CD4-positive, alpha-beta memory T cell (primary cell): ENCODE measurements at regions of chr7 and their contacts with region 1.

Region 1: DNA sequence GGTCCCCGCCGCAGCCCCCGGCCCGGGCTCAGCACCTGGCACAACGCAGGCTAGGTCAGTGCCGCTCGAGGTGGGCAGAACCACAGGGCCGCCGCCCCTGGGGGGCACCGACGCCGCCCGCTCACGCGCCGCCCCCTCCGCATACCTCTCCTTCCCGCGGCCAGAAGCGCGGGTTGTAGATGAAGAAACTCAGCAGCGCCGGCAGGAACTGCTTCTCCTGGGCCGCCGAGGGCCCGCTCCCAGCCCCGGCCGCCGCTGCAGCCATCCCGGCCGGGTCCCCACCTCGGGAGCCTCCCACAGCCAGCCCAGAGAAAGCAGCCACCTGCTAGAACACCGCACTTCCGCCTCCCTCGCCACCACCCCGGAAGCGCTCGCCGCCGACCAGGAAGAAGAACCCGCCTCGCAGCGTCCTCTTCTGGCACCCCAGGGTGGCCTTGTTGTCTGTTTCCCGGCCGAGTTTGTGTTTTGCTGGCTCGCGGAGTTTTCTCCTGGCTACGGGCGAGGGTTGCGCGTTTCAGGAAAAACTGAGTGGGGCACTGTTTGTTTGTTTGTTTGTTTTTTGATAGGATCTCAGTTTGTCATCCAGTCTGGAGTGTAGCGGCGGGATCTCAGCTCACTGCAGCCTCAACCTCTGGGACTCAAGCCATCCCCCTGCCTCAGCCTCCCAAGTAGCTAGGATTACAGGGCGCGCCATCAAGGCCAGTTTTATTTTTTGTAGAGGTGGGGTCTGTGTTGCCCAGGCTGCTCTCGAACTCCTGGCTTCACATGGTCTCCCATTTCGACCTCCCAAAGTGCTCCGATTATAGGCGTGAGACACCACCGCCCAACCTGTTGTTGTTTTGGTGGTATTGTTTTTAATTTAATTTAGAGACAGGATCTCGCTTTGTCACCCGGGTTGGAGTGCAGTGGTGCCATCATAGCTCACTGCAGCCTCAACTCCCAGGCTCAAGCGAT is 17.7 kb downstream of the OCM2 start:
- DNase-seq: peak; percentile 81 to 85 (median 83)
- H3K4me3 ChIP-seq: peak overlapping the region; percentile 91 to 93
- H3K4me3 Mint-ChIP-seq: peak overlapping the region; percentile 93 to 98 (median 96)
- H3K27ac ChIP-seq: peak overlapping the region; percentile 65
- H3K27ac Mint-ChIP-seq: peak overlapping the region; percentile 86 to 96 (median 95)
- H3K4me1 ChIP-seq: peaks cover 15% of the 10 kb centered on the region
- H3K4me1 Mint-ChIP-seq: peaks cover 10 to 35% (median 19%) of the 10 kb centered on the region in 4 donors
- H3K27me3 ChIP-seq: no peaks in the 10 kb centered on the region
- H3K27me3 Mint-ChIP-seq: no peaks in the 10 kb centered on the region

Region 2: GRCh38 chr7:97872025-97872669 is 100.1 kb before region 1 on chr7 and contains the start of gene ASNS:
- CTCF ChIA-PET with region 1: no interaction called
- POLR2A ChIA-PET with region 1: interaction called, 13 read pairs
- intact Hi-C with region 1: loop called (anchors 1 kb)
- DNase-seq: peak; percentile 80 to 88 (median 85)
- H3K4me3 ChIP-seq: peak within 1 kb of the TSS; percentile 75 to 78
- H3K4me3 Mint-ChIP-seq: peak within 1 kb of the TSS; percentile 85 to 93 (median 90)
- H3K27ac ChIP-seq: peak within 1 kb of the TSS; percentile 46
- H3K27ac Mint-ChIP-seq: peak within 1 kb of the TSS; percentile 84 to 95 (median 92)
- H3K4me1 ChIP-seq: peaks cover 20% of the 10 kb centered on the region
- H3K4me1 Mint-ChIP-seq: peaks cover 9 to 19% (median 12%) of the 10 kb centered on the region in 4 donors
- H3K27me3 ChIP-seq: no peaks in the 10 kb centered on the region
- H3K27me3 Mint-ChIP-seq: no peaks in the 10 kb centered on the region
- total RNA-seq, gene ASNS: 36.6 to 37.9 TPM

Region 3: DNA sequence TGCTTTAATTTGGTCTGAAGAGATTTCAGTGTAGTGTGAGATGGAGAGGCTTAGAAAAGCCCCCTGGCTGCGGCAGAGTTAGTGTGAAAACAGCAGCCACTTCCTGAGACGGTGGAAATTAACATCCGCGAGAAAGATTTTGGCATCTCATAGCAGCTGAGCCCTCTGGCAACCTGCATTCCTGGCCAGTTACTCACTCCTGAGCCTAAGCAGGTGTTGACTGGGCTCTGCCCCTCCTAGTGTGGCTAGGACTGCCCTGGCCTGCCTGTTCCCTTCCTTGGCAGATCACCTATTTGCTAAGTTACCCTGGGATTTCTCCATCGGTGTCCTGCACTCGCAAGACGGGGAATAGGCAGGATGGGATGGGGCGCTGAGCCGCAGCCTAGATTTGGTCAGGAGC is 76.8 kb after region 1 on chr7:
- CTCF ChIA-PET with region 1: no interaction called
- POLR2A ChIA-PET with region 1: no interaction called
- intact Hi-C with region 1: no loop called
- DNase-seq: no peak
- H3K4me3 ChIP-seq: no peak overlapping the region
- H3K4me3 Mint-ChIP-seq: no peak overlapping the region
- H3K27ac ChIP-seq: no peak overlapping the region
- H3K27ac Mint-ChIP-seq: peak overlapping the region in 1 of 7 donors; percentile 42
- H3K4me1 ChIP-seq: peaks cover 6% of the 10 kb centered on the region
- H3K4me1 Mint-ChIP-seq: peaks cover 4 to 7% (median 4%) of the 10 kb centered on the region in 4 donors
- H3K27me3 ChIP-seq: no peaks in the 10 kb centered on the region
- H3K27me3 Mint-ChIP-seq: peaks cover 0 to 1% of the 10 kb centered on the region in 2 donors

Region 4: DNA sequence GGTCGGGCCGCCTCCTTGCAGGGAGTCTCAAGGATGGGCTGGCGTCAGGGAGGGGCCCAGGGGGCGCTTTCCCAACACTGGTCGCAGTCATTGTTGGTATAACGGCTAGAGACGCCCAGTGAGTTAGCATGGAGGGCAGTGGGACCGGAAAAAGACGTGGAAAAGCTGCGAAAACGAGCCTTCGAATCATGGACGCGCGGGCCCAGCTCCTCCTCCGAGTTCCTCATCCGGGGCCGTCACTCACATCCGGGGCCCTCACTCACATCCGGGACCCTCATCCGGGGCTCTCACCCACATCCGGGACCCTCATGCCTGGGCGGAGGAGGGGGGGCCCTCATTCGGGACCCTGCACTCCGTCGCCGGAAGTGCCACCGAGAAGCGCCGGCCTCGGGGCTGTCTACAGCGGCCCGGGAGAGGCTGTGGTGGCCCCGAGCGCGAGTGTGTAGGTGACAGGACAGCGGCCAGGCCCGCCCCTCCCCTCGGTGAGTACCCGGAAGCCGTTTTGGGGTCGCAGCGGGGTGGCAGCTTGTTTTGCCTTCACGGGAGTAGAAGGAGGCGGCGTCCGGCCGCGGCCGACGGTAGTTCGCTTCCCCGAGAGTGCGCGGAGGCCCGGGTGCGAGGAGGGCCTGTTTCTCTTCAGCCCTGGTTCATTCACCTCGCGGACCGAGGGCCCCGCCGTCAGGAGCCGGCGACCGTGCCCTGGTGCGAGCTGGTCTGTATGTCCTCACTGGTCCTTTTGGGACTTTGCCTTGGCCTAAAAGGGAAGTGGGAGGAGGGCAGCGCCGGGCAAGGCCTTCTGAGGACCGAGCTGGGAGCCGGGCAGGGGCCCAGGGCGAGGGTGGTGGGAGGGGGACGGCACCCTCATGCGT is 1586.3 kb after region 1 on chr7 and contains the start of gene ZNF655:
- CTCF ChIA-PET with region 1: no interaction called
- POLR2A ChIA-PET with region 1: no interaction called
- intact Hi-C with region 1: no loop called
- DNase-seq: peak; percentile 92 to 95 (median 92)
- H3K4me3 ChIP-seq: peak within 1 kb of the TSS; percentile 76 to 97
- H3K4me3 Mint-ChIP-seq: peak within 1 kb of the TSS; percentile 91 to 100 (median 98)
- H3K27ac ChIP-seq: peak within 1 kb of the TSS; percentile 98
- H3K27ac Mint-ChIP-seq: peak within 1 kb of the TSS; percentile 96 to 99 (median 99)
- H3K4me1 ChIP-seq: peaks cover 43% of the 10 kb centered on the region
- H3K4me1 Mint-ChIP-seq: peaks cover 27 to 56% (median 42%) of the 10 kb centered on the region in 4 donors
- H3K27me3 ChIP-seq: no peaks in the 10 kb centered on the region
- H3K27me3 Mint-ChIP-seq: no peaks in the 10 kb centered on the region
- total RNA-seq, gene ZNF655: 137 to 150 TPM